PC-9 (cell line): ENCODE measurements at regions of chr17 and their contacts with region 1.

Region 1: GRCh38 chr17:44919885-44920564 is 4.7 kb upstream of the GFAP start:
- DNase-seq: peak; percentile 64 to 74
- H3K4me3 ChIP-seq: no peak overlapping the region
- H3K27ac ChIP-seq: no peak overlapping the region
- H3K4me1 ChIP-seq: peaks cover 9% of the 10 kb centered on the region
- H3K27me3 ChIP-seq: peaks cover 8% of the 10 kb centered on the region; the same call in 1 of the 2 replicates
- CTCF ChIP-seq: peak; percentile 83

Region 2: DNA sequence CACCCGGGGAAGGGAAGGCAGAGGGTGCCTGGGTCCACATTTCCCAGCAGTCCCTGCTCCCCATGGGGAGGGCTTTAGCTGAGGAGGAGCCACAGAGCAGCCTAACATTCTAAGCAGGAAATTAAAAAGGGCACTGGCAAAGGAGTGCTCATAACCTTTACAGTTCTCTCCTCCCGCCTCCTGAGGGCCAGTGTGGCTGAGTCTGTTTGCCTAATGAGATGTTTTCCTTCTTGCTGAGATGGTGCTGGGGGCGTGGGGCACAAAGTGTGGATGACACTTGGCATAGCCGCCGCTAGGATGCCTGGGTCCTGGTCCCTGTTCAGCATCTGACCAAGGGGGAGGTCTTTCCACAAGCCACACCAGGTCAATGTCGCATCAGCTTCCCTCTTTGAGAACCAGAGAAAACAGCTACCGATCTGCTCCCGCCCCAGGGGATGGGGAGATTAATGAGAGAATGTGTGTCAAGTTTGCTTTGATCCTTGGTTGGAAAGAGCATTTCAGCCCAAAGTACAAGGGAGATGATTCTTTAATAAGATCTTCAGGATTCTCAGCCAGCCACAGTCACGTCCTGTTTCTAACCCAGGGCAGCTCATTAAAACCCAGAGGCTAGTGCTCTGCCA is 21.8 kb after region 1 on chr17:
- CTCF ChIA-PET with region 1: interaction called, 12 read pairs
- POLR2A ChIA-PET with region 1: no interaction called
- intact Hi-C with region 1: no loop called
- DNase-seq: no peak
- H3K4me3 ChIP-seq: no peak overlapping the region
- H3K27ac ChIP-seq: peak overlapping the region; percentile 26; the same call in 1 of the 2 replicates
- H3K4me1 ChIP-seq: peaks cover 53% of the 10 kb centered on the region
- H3K27me3 ChIP-seq: no peaks in the 10 kb centered on the region
- CTCF ChIP-seq: no peak

Region 3: GRCh38 chr17:44988044-44988942 is 68.3 kb after region 1 on chr17:
- CTCF ChIA-PET with region 1: no interaction called
- POLR2A ChIA-PET with region 1: no interaction called
- intact Hi-C with region 1: no loop called
- DNase-seq: no peak
- H3K4me3 ChIP-seq: no peak overlapping the region
- H3K27ac ChIP-seq: no peak overlapping the region
- H3K4me1 ChIP-seq: peaks cover 8% of the 10 kb centered on the region; the same call in 1 of the 2 replicates
- H3K27me3 ChIP-seq: peaks cover 3% of the 10 kb centered on the region; the same call in 1 of the 2 replicates
- CTCF ChIP-seq: no peak

Region 4: GRCh38 chr17:45086391-45086790 is 166.4 kb after region 1 on chr17:
- CTCF ChIA-PET with region 1: interaction called, 13 read pairs
- POLR2A ChIA-PET with region 1: no interaction called
- intact Hi-C with region 1: no loop called
- DNase-seq: no peak
- H3K4me3 ChIP-seq: no peak overlapping the region
- H3K27ac ChIP-seq: no peak overlapping the region
- H3K4me1 ChIP-seq: no peaks in the 10 kb centered on the region
- H3K27me3 ChIP-seq: no peaks in the 10 kb centered on the region
- CTCF ChIP-seq: no peak

Region 5: DNA sequence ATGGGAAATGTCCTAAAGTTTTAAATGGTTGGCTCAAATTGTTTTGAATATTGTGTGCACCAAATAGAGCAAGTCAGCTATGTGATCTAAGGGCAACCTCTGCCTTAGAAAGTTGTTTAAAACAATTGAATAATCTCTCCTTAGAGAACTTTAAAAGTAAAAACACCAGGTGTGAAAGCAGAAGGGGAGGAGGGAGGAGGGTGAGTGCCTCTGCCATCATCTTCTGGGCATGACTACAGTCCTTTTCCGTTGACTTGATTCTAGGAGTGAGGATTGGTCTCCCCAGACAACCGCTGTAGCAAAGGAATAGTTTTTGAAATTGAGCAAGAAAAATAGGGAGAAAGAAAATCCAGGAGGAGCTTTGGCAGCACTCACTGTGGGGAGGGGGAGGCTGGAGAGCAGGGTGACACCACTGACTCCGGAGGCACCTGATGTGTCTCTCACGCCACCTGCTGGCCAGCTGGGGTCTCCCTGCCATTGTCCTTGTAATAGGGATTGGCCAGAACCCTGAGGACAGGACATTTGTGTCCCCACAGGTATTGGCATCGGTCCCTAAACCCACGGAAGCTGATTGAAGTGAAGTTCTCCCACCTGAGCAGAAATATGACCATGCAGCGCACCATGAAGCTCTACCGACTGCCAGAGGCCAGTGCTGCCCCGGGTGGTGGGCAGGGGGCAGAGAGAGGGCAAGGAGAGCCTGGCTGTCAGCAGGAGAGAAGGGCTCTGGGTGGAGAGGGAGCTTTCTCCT is 179.0 kb after region 1 on chr17:
- CTCF ChIA-PET with region 1: no interaction called
- POLR2A ChIA-PET with region 1: no interaction called
- intact Hi-C with region 1: loop called (anchors 1 kb)
- DNase-seq: peak; percentile 61 to 81
- H3K4me3 ChIP-seq: no peak overlapping the region
- H3K27ac ChIP-seq: no peak overlapping the region
- H3K4me1 ChIP-seq: peaks cover under 1% of the 10 kb centered on the region; the same call in 1 of the 2 replicates
- H3K27me3 ChIP-seq: no peaks in the 10 kb centered on the region
- CTCF ChIP-seq: peak; percentile 91